OCI-LY7 (cell line): ENCODE measurements at regions of chr6 and their contacts with region 1.

Region 1: DNA sequence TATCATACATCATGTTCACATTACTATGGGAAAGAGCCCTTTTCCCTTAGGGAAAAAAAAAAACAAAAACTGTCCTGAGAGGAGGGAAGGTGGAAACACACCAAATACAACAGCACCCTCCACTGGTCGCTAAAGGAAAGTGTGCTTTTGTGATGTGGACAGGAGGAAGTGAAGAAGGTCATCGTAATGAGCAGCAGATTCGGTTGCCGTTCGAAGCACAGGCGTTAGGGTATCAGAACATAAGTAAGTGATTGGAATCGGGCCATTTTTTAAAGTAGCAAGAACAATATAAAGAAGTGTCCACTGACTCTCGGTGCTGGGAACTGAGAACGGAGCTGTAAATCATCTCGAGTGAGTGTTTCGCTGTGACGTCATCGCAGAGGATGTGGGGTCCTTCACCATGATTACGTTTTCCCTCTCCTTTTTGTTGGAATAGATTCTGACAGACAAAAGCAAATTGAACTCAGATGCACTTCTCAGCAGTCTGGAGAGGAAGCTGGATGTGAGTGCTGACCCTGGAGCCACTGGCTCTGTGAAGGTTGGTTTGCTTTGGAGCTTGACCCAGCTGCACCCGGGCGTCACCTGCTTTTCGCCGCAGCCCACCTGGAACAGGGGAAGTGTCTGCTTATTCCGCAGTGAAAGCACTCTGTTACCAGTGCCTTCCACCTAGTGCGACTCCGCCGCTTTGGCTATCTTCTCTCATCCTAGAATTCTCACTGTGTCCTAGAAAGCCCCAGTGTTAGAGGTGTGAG is 203.6 kb upstream of the GMDS start:
- DNase-seq: peak; percentile 27
- H3K4me3 ChIP-seq: no peak overlapping the region
- H3K27ac ChIP-seq: no peak overlapping the region
- H3K4me1 ChIP-seq: no peaks in the 10 kb centered on the region
- CTCF ChIP-seq: peak; percentile 83

Region 2: GRCh38 chr6:1609648-1610496 is 839.1 kb before region 1 on chr6 and contains the start of gene FOXC1:
- CTCF ChIA-PET with region 1: no interaction called
- POLR2A ChIA-PET with region 1: no interaction called
- intact Hi-C with region 1: loop called (anchors 10 kb)
- DNase-seq: no peak
- H3K4me3 ChIP-seq: no peak within 1 kb of the TSS
- H3K27ac ChIP-seq: no peak within 1 kb of the TSS
- H3K4me1 ChIP-seq: no peaks in the 10 kb centered on the region
- CTCF ChIP-seq: no peak
- total RNA-seq, gene FOXC1: not detected in 2 replicates

Region 3: GRCh38 chr6:2818593-2818992 is 369.6 kb after region 1 on chr6:
- CTCF ChIA-PET with region 1: no interaction called
- POLR2A ChIA-PET with region 1: no interaction called
- intact Hi-C with region 1: no loop called
- DNase-seq: no peak
- H3K4me3 ChIP-seq: no peak overlapping the region
- H3K27ac ChIP-seq: no peak overlapping the region
- H3K4me1 ChIP-seq: no peaks in the 10 kb centered on the region
- CTCF ChIP-seq: no peak